Spleen (tissue), 13 donors: ENCODE measurements at regions of chr5 and their contacts with region 1.

Region 1: GRCh38 chr5:122195784-122196394 is 66.5 kb downstream of the ZNF474 start:
- DNase-seq: no peak
- H3K4me3 ChIP-seq: no peak overlapping the region
- H3K27ac ChIP-seq: no peak overlapping the region
- H3K4me1 ChIP-seq: peaks cover 0 to 11% (median 1%) of the 10 kb centered on the region in 6 donors
- H3K27me3 ChIP-seq: no peaks in the 10 kb centered on the region
- CTCF ChIP-seq: peak in 9 of 11 experiments; percentile 18 to 54 (median 45)
- POLR2A ChIP-seq: no peak

Region 2: DNA sequence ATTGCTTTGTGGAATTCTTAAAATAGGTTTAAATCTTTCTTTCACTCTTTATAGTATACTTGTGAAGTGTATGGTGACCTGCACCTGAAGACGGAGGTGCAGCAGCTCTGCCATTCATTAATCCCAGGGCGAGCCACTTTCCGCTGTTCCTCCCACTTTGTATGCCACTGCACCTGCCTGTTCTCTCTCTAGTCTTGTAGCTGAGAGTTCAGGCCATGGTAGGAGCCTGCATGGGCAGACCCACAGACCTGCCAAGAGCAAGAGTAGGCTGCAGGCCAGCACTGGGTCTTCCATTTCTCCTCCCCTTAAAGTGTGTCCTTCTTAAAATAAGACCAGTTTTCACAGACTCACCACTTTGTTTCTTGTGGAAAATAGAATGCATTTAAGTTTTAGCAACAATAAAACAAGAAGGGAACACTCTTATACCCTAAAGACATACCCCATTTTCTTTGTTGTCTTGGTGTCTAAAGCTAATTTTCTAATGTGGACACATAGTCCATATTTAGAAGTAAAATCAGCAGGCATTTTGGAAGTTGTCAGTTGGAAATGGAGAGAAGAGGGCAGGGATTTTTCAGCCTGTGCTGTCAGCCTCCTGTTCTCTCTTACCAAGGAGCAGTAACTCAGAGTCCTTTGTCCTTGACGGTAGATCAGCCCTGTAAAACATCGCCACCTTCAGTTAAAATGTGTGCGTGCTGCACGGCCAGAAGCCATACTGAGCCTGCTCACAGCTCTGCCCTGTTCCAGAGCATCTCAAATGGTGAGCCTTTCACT is 219.3 kb after region 1 on chr5:
- intact Hi-C with region 1: loop called (anchors 5 kb)
- DNase-seq: no peak
- H3K4me3 ChIP-seq: no peak overlapping the region
- H3K27ac ChIP-seq: no peak overlapping the region
- H3K4me1 ChIP-seq: peaks cover 0 to 8% (median 0%) of the 10 kb centered on the region in 6 donors
- H3K27me3 ChIP-seq: peaks cover 0 to 12% (median 0%) of the 10 kb centered on the region in 7 donors
- CTCF ChIP-seq: peak; percentile 13 to 67 (median 55)
- POLR2A ChIP-seq: no peak

Region 3: DNA sequence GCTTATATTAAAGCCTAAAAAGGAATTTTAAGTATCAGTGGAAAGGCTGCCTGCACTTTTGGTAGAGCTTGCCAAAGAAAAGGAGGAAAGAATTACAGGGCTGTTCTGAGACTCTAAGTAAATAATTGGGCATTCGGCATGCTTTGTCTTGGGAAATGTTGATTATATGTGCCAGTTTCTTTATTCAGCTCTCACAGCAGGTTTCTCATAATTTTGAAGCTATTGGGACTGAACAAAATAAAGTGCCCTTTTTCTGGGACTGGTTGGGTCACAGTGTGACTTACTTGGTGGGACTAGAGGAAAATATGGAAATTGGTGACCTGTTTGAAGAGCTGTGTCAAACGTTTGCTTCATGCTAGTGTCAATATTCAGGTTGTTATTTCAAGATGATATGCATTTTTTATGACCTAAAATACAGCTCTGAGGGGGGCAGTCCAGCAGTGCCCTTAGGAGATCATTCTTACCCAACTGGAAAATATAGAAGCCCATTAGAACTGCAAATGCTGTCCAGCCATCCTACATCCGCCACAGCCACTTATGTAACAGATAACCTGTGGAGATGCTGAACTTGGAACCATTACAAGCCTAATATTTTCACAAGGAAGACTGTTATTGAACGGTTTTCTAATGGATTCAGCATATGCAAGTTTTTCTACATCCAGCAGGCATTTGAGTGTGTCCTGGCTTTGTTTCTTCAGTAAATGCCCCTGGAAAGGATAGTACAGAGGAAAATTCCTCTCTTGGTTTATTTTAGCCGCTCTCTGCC is 238.5 kb after region 1 on chr5:
- intact Hi-C with region 1: no loop called
- DNase-seq: no peak
- H3K4me3 ChIP-seq: no peak overlapping the region
- H3K27ac ChIP-seq: no peak overlapping the region
- H3K4me1 ChIP-seq: no peaks in the 10 kb centered on the region
- H3K27me3 ChIP-seq: no peaks in the 10 kb centered on the region
- CTCF ChIP-seq: no peak
- POLR2A ChIP-seq: no peak